Ascending aorta (tissue), 2 donors: ENCODE measurements at regions of chr10 and their contacts with region 1.

Region 1: GRCh38 chr10:62038609-62039190 is 137.2 kb downstream of the ARID5B start:
- DNase-seq: peak in 1 of 2 donors; percentile 85
- H3K4me3 ChIP-seq: peak overlapping the region; percentile 14 to 25
- H3K27ac ChIP-seq: peak overlapping the region; percentile 84 to 90
- H3K4me1 ChIP-seq: peaks cover 12 to 46% of the 10 kb centered on the region in 2 donors
- H3K27me3 ChIP-seq: no peaks in the 10 kb centered on the region
- CTCF ChIP-seq: peak; percentile 74 to 87 (median 81)

Region 2: DNA sequence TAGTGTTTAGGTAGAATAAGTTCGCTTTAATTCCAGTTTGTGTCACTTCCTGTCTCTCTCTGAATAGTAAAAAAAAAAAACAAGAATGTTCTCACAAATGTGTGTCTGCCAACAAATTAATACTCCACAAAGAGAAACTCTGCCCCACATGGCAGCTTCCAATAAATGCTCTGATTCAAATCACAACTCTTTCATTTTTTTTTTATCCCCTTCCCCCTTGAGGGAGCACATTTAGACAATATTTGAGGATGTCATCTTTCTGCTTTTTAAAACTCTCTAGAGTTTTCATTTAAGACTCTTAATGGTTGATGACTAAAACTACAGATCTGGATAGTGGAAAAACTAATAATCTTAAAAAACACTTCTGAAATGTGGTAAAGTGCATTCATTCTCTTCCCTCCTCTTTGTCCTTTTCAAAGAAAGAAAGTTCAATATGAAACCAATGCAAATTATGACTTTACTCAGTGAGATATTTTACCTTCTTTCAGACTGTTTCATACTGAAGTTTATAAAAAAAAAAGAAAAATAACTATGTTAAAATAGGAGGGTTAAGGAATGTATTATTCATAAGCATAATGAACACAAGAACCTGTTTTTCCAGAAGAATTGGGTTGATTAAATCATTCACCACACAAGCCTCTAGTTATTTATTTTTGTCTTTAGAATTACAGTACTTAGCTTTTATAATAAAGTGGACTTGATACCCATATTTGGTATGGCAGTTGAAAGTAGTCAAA is 94.9 kb before region 1 on chr10:
- intact Hi-C with region 1: loop called (anchors 5 kb)
- DNase-seq: no peak
- H3K4me3 ChIP-seq: peak overlapping the region in 1 of 2 donors; percentile 32
- H3K27ac ChIP-seq: peak overlapping the region; percentile 79
- H3K4me1 ChIP-seq: peaks cover 6 to 49% of the 10 kb centered on the region in 2 donors
- H3K27me3 ChIP-seq: no peaks in the 10 kb centered on the region
- CTCF ChIP-seq: peak in 2 of 3 experiments; percentile 21 to 22

Region 3: GRCh38 chr10:62005281-62005680 is 33.4 kb before region 1 on chr10:
- intact Hi-C with region 1: loop called (anchors 1 kb)
- DNase-seq: no peak
- H3K4me3 ChIP-seq: no peak overlapping the region
- H3K27ac ChIP-seq: peak overlapping the region; percentile 75 to 77
- H3K4me1 ChIP-seq: peaks cover 7 to 58% of the 10 kb centered on the region in 2 donors
- H3K27me3 ChIP-seq: no peaks in the 10 kb centered on the region
- CTCF ChIP-seq: no peak

Region 4: GRCh38 chr10:62186999-62187677 is 148.4 kb after region 1 on chr10:
- intact Hi-C with region 1: loop called (anchors 5 kb)
- DNase-seq: no peak
- H3K4me3 ChIP-seq: peak overlapping the region in 1 of 2 donors; percentile 5
- H3K27ac ChIP-seq: peak overlapping the region; percentile 17 to 76
- H3K4me1 ChIP-seq: peaks cover 0 to 7% of the 10 kb centered on the region in 2 donors
- H3K27me3 ChIP-seq: no peaks in the 10 kb centered on the region
- CTCF ChIP-seq: no peak